CD14-positive monocyte (primary cell): ENCODE measurements at regions of chr12 and their contacts with region 1.

Region 1: GRCh38 chr12:55675666-55676065 is 32.0 kb downstream of the ITGA7 start:
- DNase-seq: peak; percentile 63 to 78 (median 63)
- H3K4me3 ChIP-seq: no peak overlapping the region
- H3K4me3 Mint-ChIP-seq: no peak overlapping the region
- H3K27ac ChIP-seq: peak overlapping the region; percentile 69 to 86
- H3K27ac Mint-ChIP-seq: peak overlapping the region; percentile 89 to 96 (median 93)
- H3K4me1 ChIP-seq: peaks cover 49 to 57% of the 10 kb centered on the region in 2 donors
- H3K4me1 Mint-ChIP-seq: peaks cover 47% of the 10 kb centered on the region
- H3K27me3 ChIP-seq: no peaks in the 10 kb centered on the region
- H3K27me3 Mint-ChIP-seq: peaks cover 0 to 4% (median 0%) of the 10 kb centered on the region in 3 donors
- CTCF ChIP-seq: no peak

Region 2: GRCh38 chr12:55642669-55643068 is 33.0 kb before region 1 on chr12:
- intact Hi-C with region 1: loop called in 1 of 2 experiments (anchors 5 kb)
- DNase-seq: peak; percentile 65 to 75 (median 68)
- H3K4me3 ChIP-seq: peak overlapping the region in 1 of 3 experiments; percentile 55
- H3K4me3 Mint-ChIP-seq: peak overlapping the region; percentile 58 to 60
- H3K27ac ChIP-seq: peak overlapping the region; percentile 84 to 94
- H3K27ac Mint-ChIP-seq: peak overlapping the region; percentile 95 to 98 (median 98)
- H3K4me1 ChIP-seq: peaks cover 70 to 76% of the 10 kb centered on the region in 2 donors
- H3K4me1 Mint-ChIP-seq: peaks cover 68% of the 10 kb centered on the region
- H3K27me3 ChIP-seq: no peaks in the 10 kb centered on the region
- H3K27me3 Mint-ChIP-seq: peaks cover 0 to 3% (median 1%) of the 10 kb centered on the region in 3 donors
- CTCF ChIP-seq: no peak

Region 3: DNA sequence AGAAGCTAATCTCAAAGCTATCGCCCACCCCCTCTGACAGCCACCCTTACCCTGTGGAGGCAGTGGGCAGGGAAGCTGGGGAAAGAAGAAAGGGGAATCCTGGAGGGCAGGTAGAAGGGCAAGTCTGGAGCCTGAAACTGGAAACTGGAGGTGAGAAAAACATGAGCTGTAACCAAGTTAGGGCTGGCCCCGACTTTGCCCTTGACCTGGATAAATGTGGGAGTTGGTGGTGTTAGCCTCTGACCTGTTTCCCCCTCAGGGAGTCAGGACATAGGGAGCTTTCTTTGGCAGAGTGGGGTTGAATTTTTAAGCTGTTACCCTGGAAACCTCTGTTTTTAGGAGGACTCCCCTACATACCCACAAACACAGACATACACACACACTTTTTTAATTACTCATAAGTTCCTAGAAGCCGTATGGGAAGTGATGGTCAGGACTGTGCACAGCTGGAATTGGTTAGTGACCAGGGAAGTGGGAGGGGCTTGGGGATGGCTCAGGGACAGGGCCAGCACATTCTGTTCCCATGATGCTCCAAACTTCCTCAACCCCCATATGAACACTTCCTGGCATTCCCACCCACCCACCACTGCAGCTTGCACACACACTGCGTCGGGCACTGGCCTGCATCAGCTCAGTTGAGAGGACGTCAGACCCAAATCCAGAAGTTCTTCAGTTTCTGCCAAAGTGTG is 172.1 kb after region 1 on chr12:
- intact Hi-C with region 1: no loop called
- DNase-seq: peak; percentile 73 to 96 (median 89)
- H3K4me3 ChIP-seq: peak overlapping the region in 1 of 3 experiments; percentile 63
- H3K4me3 Mint-ChIP-seq: peak overlapping the region; percentile 24 to 46
- H3K27ac ChIP-seq: peak overlapping the region; percentile 73 to 92
- H3K27ac Mint-ChIP-seq: peak overlapping the region; percentile 90 to 97 (median 97)
- H3K4me1 ChIP-seq: peaks cover 22 to 25% of the 10 kb centered on the region in 2 donors
- H3K4me1 Mint-ChIP-seq: peaks cover 40% of the 10 kb centered on the region
- H3K27me3 ChIP-seq: no peaks in the 10 kb centered on the region
- H3K27me3 Mint-ChIP-seq: peaks cover 2 to 7% (median 5%) of the 10 kb centered on the region in 3 donors
- CTCF ChIP-seq: no peak